Heart right ventricle (tissue), 16 donors: ENCODE measurements at regions of chr4 and their contacts with region 1.

Region 1: GRCh38 chr4:168923526-168924194 is 86.4 kb downstream of the CBR4 start:
- DNase-seq: peak in 1 of 2 donors; percentile 63
- ATAC-seq: peak in 6 of 8 donors; percentile 18 to 68 (median 55)
- H3K4me3 ChIP-seq: no peak overlapping the region
- H3K27ac ChIP-seq: no peak overlapping the region
- H3K4me1 ChIP-seq: peaks cover 0 to 15% (median 7%) of the 10 kb centered on the region in 9 donors
- H3K27me3 ChIP-seq: no peaks in the 10 kb centered on the region
- CTCF ChIP-seq: peak; percentile 55 to 86 (median 78)

Region 2: DNA sequence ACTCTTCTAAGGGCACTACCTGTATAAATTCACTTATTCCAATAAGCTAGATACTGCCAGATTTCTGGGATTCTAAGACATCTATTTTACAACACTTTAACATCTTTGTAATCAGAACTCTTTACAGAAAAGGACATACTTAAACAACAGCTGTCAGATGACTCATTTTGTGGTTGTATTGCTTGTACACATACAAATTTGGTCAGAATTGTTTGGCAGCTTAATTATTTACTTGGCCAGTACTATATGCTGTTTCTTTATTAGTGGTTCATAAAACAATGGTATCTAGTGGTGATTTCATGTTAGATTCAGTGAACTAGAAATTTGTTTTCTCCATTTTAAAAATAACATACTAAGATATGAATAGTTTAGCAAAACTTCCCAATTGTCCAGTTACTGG is 399.7 kb before region 1 on chr4:
- intact Hi-C with region 1: loop called in 7 of 10 experiments (anchors 5 to 10 kb)
- DNase-seq: no peak
- ATAC-seq: no peak
- H3K4me3 ChIP-seq: no peak overlapping the region
- H3K27ac ChIP-seq: peak overlapping the region in 7 of 10 donors; percentile 8 to 79 (median 36)
- H3K4me1 ChIP-seq: peaks cover 0 to 60% (median 32%) of the 10 kb centered on the region in 9 donors
- H3K27me3 ChIP-seq: no peaks in the 10 kb centered on the region
- CTCF ChIP-seq: no peak

Region 3: DNA sequence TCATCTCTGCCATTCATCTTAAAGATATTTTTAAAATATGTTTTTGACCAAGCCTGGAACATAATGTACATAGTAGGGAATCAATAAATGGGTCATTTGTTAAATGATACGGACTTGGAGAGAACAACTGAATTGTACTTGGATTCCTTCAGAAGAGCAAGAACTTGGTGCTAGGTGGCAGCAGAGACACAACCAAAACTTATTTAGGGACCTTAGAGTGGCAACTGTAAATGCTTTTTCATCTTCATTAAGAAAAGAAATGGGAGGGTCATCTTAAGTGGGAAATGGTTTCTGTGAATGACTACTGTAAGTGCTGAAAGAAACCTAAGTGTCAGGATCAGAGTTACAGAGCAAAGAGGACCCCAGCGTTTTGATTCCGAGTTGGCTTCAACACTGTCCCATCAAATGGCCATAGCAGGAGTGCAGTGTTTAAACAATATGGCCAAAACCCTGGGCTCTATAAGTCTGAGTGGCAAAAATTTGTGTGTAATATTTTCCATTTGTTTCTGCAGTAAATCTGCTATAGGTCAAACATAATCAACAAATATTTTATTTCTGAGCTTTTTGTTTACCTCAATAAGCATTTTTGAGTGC is 213.2 kb before region 1 on chr4:
- intact Hi-C with region 1: loop called in 7 of 10 experiments (anchors 2 to 5 kb)
- DNase-seq: peak in 1 of 2 donors; percentile 36
- ATAC-seq: peak in 7 of 8 donors; percentile 49 to 78 (median 65)
- H3K4me3 ChIP-seq: no peak overlapping the region
- H3K27ac ChIP-seq: peak overlapping the region in 6 of 10 donors; percentile 44 to 77 (median 62)
- H3K4me1 ChIP-seq: peaks cover 8 to 30% (median 22%) of the 10 kb centered on the region in 9 donors
- H3K27me3 ChIP-seq: no peaks in the 10 kb centered on the region
- CTCF ChIP-seq: peak; percentile 30 to 76 (median 61)

Region 4: GRCh38 chr4:169270810-169271691 is 347.4 kb after region 1 on chr4 and contains the start of gene SH3RF1:
- intact Hi-C with region 1: no loop called
- DNase-seq: peak; percentile 91
- ATAC-seq: peak; percentile 95 to 98 (median 96)
- H3K4me3 ChIP-seq: peak within 1 kb of the TSS; percentile 81 to 99 (median 94)
- H3K27ac ChIP-seq: peak within 1 kb of the TSS; percentile 80 to 97 (median 94)
- H3K4me1 ChIP-seq: peaks cover 2 to 54% (median 41%) of the 10 kb centered on the region in 9 donors
- H3K27me3 ChIP-seq: peaks cover 0 to 5% (median 0%) of the 10 kb centered on the region in 7 donors
- CTCF ChIP-seq: peak in 8 of 9 donors; percentile 20 to 59 (median 40)
- total RNA-seq, gene SH3RF1: 7.0 to 11.7 (median 9.9) TPM

Region 5: GRCh38 chr4:169305651-169306050 is 382.0 kb after region 1 on chr4:
- intact Hi-C with region 1: loop called in 1 of 10 experiments (anchors 10 kb)
- DNase-seq: peak in 1 of 2 donors; percentile 20
- ATAC-seq: peak; percentile 53 to 93 (median 82)
- H3K4me3 ChIP-seq: no peak overlapping the region
- H3K27ac ChIP-seq: peak overlapping the region in 5 of 10 donors; percentile 20 to 74 (median 69)
- H3K4me1 ChIP-seq: peaks cover 0 to 13% (median 6%) of the 10 kb centered on the region in 9 donors
- H3K27me3 ChIP-seq: no peaks in the 10 kb centered on the region
- CTCF ChIP-seq: no peak

Region 6: DNA sequence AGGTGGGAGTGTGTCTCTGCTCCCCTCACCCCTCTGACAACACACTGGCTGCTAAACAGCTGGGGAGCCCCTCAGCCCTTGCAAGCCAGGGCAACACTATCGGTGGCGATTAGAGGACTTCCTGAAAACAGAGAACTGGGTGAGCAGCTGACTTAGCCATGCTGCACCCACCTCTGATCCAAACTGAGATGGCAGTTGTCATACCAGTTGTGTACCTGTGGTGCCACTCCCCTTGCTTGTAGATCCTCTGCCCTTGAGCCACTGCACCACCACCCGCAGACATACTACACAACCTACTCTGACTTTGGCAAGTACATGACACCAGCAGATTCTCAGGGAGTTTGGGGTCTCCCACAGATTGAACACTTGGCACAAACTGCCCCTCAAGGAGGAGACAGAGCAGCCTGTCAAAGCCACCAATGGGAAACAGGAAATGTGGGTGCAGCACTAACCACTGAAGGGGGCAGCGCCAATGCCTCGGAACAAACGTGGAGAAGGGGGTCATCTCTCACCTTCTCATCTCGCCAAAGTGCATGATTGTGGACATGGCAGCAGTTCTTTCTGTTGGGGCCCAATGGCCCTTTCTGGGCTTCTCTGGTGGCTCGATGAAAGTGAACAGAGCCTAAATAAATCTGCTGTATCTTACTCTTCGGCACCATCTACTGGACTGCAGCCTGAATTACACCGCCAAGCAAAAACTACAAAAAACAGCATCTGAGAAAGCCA is 568.9 kb after region 1 on chr4:
- intact Hi-C with region 1: loop called in 9 of 10 experiments (anchors 2 to 10 kb)
- DNase-seq: no peak
- ATAC-seq: peak in 4 of 8 donors; percentile 37 to 53 (median 44)
- H3K4me3 ChIP-seq: no peak overlapping the region
- H3K27ac ChIP-seq: no peak overlapping the region
- H3K4me1 ChIP-seq: no peaks in the 10 kb centered on the region
- H3K27me3 ChIP-seq: no peaks in the 10 kb centered on the region
- CTCF ChIP-seq: peak; percentile 27 to 71 (median 60)